ENCODE measurements at regions of chr15 and their contacts with region 1.

Region 1: GRCh38 chr15:89129123-89129815 is 41.0 kb downstream of the ABHD2 start:
- DNase-seq: no peak
- ATAC-seq: no peak
- H3K4me3 ChIP-seq: peak overlapping the region in 1 of 3 experiments; percentile 4; a peak in 1 of 6 replicates
- H3K27ac ChIP-seq: peak overlapping the region; percentile 76
- H3K4me1 ChIP-seq: peaks cover 100% of the 10 kb centered on the region
- H3K27me3 ChIP-seq: no peaks in the 10 kb centered on the region
- CTCF ChIP-seq: peak; percentile 75
- EP300 ChIP-seq: no peak
- POLR2A ChIP-seq: no peak
- RAD21 ChIP-seq: peak; percentile 77

Region 2: GRCh38 chr15:89112341-89112971 is 16.8 kb before region 1 on chr15:
- CTCF ChIA-PET with region 1: no interaction called
- POLR2A ChIA-PET with region 1: interaction called, 14 read pairs
- in situ Hi-C with region 1: no loop called
- intact Hi-C with region 1: no loop called
- DNase-seq: peak; percentile 77
- ATAC-seq: peak; percentile 93
- H3K4me3 ChIP-seq: no peak overlapping the region
- H3K27ac ChIP-seq: peak overlapping the region; percentile 69
- H3K4me1 ChIP-seq: peaks cover 78% of the 10 kb centered on the region
- H3K27me3 ChIP-seq: no peaks in the 10 kb centered on the region
- CTCF ChIP-seq: no peak
- EP300 ChIP-seq: peak in 1 of 2 experiments; percentile 83; a peak in 3 of 4 replicates
- POLR2A ChIP-seq: no peak
- RAD21 ChIP-seq: no peak

Region 3: GRCh38 chr15:89150762-89151664 is 21.7 kb after region 1 on chr15:
- CTCF ChIA-PET with region 1: no interaction called
- POLR2A ChIA-PET with region 1: no interaction called
- in situ Hi-C with region 1: no loop called
- intact Hi-C with region 1: no loop called
- DNase-seq: peak; percentile 50
- ATAC-seq: peak; percentile 74
- H3K4me3 ChIP-seq: no peak overlapping the region
- H3K27ac ChIP-seq: peak overlapping the region; percentile 49
- H3K4me1 ChIP-seq: peaks cover 23% of the 10 kb centered on the region
- H3K27me3 ChIP-seq: no peaks in the 10 kb centered on the region
- CTCF ChIP-seq: no peak
- EP300 ChIP-seq: 0 out of 4 replicates have a peak, but pooled peaks of 1 of the 2 experiments have one; percentile 12
- POLR2A ChIP-seq: no peak
- RAD21 ChIP-seq: no peak

Region 4: DNA sequence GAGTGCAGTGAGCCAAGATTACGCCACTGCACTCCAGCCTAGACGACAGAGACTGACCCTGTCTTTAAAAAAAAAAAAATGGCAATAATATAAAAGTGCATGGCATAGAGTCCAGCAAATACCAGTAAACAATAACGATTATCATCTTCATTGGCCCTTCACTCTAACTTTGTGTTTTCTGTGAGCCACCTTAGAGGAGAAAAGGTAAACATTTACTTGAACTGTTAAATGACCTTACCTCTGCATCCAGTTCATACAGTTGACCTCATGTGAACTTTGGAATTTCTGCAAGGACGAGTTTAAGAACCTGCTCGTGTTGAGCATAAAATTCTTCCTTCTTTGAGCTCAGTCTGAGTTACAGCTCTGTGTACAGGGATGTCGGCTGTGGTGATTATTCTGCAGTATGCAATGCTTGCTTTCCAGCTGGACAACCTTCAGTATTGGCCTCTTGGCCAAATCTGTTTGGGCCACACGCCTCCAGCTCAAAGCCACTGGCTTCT is 35.5 kb after region 1 on chr15:
- CTCF ChIA-PET with region 1: no interaction called
- POLR2A ChIA-PET with region 1: interaction called, 21 read pairs
- in situ Hi-C with region 1: no loop called
- intact Hi-C with region 1: no loop called
- DNase-seq: peak; percentile 47
- ATAC-seq: peak; percentile 94
- H3K4me3 ChIP-seq: no peak overlapping the region
- H3K27ac ChIP-seq: peak overlapping the region; percentile 65
- H3K4me1 ChIP-seq: peaks cover 65% of the 10 kb centered on the region
- H3K27me3 ChIP-seq: no peaks in the 10 kb centered on the region
- CTCF ChIP-seq: no peak
- EP300 ChIP-seq: peak in 1 of 2 experiments; percentile 43; a peak in 1 of 4 replicates
- POLR2A ChIP-seq: no peak
- RAD21 ChIP-seq: no peak

Region 5: GRCh38 chr15:89566141-89566540 is 436.9 kb after region 1 on chr15:
- CTCF ChIA-PET with region 1: no interaction called
- POLR2A ChIA-PET with region 1: no interaction called
- in situ Hi-C with region 1: no loop called
- intact Hi-C with region 1: no loop called
- DNase-seq: no peak
- ATAC-seq: peak; percentile 48
- H3K4me3 ChIP-seq: no peak overlapping the region
- H3K27ac ChIP-seq: no peak overlapping the region
- H3K4me1 ChIP-seq: no peaks in the 10 kb centered on the region
- H3K27me3 ChIP-seq: peaks cover 0 to 17% of the 10 kb centered on the region in 2 experiments; a peak in 3 of 5 replicates
- CTCF ChIP-seq: no peak
- EP300 ChIP-seq: no peak
- POLR2A ChIP-seq: no peak
- RAD21 ChIP-seq: no peak